Gastrocnemius medialis (tissue), 4 donors: ENCODE measurements at regions of chr11 and their contacts with region 1.

Region 1: GRCh38 chr11:64269380-64270234 is 14.9 kb downstream of the BAD start:
- DNase-seq: peak; percentile 99
- ATAC-seq: peak; percentile 84 to 91
- H3K4me3 ChIP-seq: peak overlapping the region; percentile 82 to 100 (median 93)
- H3K27ac ChIP-seq: peak overlapping the region; percentile 94 to 99 (median 98)
- H3K4me1 ChIP-seq: peaks cover 22% of the 10 kb centered on the region in 2 donors
- H3K27me3 ChIP-seq: no peaks in the 10 kb centered on the region
- CTCF ChIP-seq: peak in 3 of 5 experiments; percentile 11 to 22 (median 16)
- POLR2A ChIP-seq: peak; percentile 35 to 47

Region 2: DNA sequence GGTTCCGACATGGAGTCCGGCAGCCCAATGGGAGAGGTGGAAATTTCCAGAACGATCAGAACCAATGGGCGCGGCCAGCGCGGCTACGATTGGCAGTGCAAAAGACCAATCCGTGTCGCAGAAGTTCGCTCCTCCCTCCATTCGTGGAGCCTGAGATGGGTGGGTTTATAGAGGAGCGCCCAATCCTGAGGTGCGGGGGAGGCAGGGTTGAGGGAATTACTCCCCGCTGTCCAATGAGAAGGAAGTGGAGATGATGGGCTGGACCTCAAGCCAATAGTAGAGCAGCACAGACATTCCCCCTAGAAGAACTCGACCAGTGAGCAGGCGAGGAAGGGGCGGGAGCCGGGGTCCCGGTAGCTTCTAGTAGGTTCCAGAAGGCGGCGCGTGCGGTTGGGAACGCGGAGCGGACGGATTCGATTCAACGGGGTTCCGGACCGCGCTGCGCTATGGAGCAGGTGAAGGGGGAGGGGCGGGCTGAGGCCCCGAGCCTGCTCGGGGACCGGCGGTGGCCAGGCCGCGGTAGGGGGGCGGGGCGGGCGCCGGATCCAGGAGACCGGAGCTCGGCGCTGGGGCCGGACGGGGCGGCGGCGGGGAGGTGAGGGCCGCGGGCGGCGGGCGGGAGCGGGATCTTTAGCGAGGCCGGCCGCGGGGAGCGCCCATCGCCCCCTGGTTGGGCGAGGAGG is 83.7 kb before region 1 on chr11 and contains the start of gene STIP1:
- in situ Hi-C with region 1: no loop called
- intact Hi-C with region 1: loop called (anchors 5 kb)
- DNase-seq: peak; percentile 100
- ATAC-seq: peak; percentile 84 to 85
- H3K4me3 ChIP-seq: peak within 1 kb of the TSS; percentile 68 to 85 (median 77)
- H3K27ac ChIP-seq: peak within 1 kb of the TSS; percentile 95 to 99 (median 98)
- H3K4me1 ChIP-seq: peaks cover 37 to 44% of the 10 kb centered on the region in 2 donors
- H3K27me3 ChIP-seq: no peaks in the 10 kb centered on the region
- CTCF ChIP-seq: no peak
- POLR2A ChIP-seq: peak in 1 of 2 donors; percentile 19
- total RNA-seq, gene STIP1: 141 to 193 (median 168) TPM

Region 3: GRCh38 chr11:64240394-64241174 is 29.0 kb before region 1 on chr11 and contains the start of gene FKBP2:
- in situ Hi-C with region 1: no loop called
- intact Hi-C with region 1: loop called (anchors 2 kb)
- DNase-seq: peak; percentile 94 to 98
- ATAC-seq: peak; percentile 64 to 69
- H3K4me3 ChIP-seq: peak within 1 kb of the TSS; percentile 85 to 96 (median 91)
- H3K27ac ChIP-seq: peak within 1 kb of the TSS; percentile 92 to 100 (median 96)
- H3K4me1 ChIP-seq: peaks cover 33 to 42% of the 10 kb centered on the region in 2 donors
- H3K27me3 ChIP-seq: no peaks in the 10 kb centered on the region
- CTCF ChIP-seq: no peak
- POLR2A ChIP-seq: peak; percentile 97 to 98
- total RNA-seq, gene FKBP2: 20.2 to 54.7 (median 27.6) TPM

Region 4: DNA sequence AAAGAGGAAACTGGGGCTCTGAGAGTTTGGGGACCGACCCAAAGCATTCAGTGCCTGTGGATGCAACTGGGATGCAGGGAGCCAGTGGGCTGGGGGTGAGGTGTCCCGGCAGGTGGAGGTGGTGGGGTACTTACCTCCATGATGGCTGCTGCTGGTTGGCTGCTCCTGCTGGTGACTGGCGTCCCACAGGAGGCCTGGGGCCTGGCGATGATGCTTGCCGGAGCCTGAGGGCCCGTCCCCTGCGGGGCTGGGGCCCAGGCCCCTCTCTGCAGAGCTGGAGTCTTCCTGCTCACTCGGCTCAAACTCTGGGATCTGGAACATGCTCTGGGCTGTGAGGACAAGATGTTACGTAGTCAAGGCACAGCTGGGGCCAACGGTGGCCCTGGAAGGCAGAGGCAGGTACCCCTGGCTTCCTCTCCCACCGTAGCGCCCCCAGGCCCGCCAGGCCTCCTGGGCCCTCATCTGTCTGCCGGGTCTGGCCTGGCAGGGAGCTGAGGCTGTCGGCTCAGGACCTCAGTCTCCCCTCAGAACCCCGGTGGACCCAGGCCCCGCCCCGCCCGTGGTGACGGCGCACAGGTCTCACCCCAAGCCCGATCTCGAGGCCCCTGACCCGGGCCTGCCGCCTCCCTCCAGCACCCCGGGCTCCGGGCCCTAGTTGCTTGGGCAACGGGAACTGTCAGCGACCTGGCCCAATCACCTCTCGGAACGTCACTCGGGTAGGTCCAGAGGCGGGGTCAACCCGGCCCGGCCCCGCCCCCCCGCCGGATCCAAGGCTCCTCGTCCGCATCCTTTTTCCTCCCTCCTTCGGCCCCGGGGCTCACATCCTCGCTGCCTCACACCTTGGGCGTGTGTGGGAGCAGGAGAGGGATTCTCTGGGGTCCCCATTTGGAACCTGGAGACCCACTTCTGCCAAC is 14.7 kb after region 1 on chr11 and contains the start of gene BAD:
- in situ Hi-C with region 1: no loop called
- intact Hi-C with region 1: loop called (anchors 1 kb)
- DNase-seq: peak; percentile 94 to 95
- ATAC-seq: peak; percentile 87
- H3K4me3 ChIP-seq: peak within 1 kb of the TSS; percentile 84 to 97 (median 90)
- H3K27ac ChIP-seq: peak within 1 kb of the TSS; percentile 90 to 97 (median 94)
- H3K4me1 ChIP-seq: peaks cover 22 to 25% of the 10 kb centered on the region in 2 donors
- H3K27me3 ChIP-seq: no peaks in the 10 kb centered on the region
- CTCF ChIP-seq: no peak
- POLR2A ChIP-seq: peak; percentile 80 to 81
- total RNA-seq, gene BAD: 27.8 to 88.0 (median 76.3) TPM

Region 5: GRCh38 chr11:64317957-64318693 is 48.5 kb after region 1 on chr11 and contains the start of gene PRDX5:
- in situ Hi-C with region 1: no loop called
- intact Hi-C with region 1: loop called (anchors 1 kb)
- DNase-seq: peak; percentile 94 to 97
- ATAC-seq: peak; percentile 80 to 85
- H3K4me3 ChIP-seq: peak within 1 kb of the TSS; percentile 73 to 99 (median 91)
- H3K27ac ChIP-seq: peak within 1 kb of the TSS; percentile 88 to 98 (median 94)
- H3K4me1 ChIP-seq: peaks cover 25 to 36% of the 10 kb centered on the region in 2 donors
- H3K27me3 ChIP-seq: no peaks in the 10 kb centered on the region
- CTCF ChIP-seq: peak in 4 of 5 experiments; percentile 34 to 62 (median 56)
- POLR2A ChIP-seq: peak; percentile 73 to 81
- total RNA-seq, gene PRDX5: 170 to 257 (median 219) TPM

Region 6: DNA sequence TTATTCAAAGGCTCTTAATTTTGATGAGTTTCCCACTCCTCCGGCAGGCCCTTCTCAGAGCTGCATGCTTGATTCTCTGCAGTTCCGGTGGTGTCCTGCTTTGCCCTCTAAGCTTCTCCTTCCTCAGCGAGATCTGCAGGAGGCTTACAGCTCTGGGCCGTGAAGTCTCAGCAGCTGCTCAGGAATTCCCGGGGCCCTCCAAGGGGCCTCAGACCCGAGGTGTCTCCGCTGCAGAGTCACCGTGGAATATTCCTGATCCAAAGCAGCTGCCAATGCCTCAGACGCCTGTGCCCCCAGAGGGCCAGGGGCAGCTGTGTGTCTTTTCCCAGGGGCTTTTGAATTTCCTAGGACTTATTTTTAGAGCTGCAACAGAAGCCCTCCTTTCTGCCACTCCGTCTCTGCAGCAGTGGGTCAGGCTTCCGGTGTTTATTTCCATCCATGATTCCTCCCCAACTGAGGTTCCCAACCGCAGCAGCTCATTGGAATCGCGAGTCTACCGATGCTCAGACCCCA is 126.5 kb after region 1 on chr11:
- in situ Hi-C with region 1: no loop called
- intact Hi-C with region 1: no loop called
- DNase-seq: no peak
- ATAC-seq: no peak
- H3K4me3 ChIP-seq: peak overlapping the region in 1 of 4 donors; percentile 15
- H3K27ac ChIP-seq: no peak overlapping the region
- H3K4me1 ChIP-seq: peaks cover 0 to 14% of the 10 kb centered on the region in 2 donors
- H3K27me3 ChIP-seq: no peaks in the 10 kb centered on the region
- CTCF ChIP-seq: no peak
- POLR2A ChIP-seq: no peak